ENCODE measurements at regions of chr15 and their contacts with region 1.

Region 1: GRCh38 chr15:74781431-74782258 is at the start of gene CSK:
- DNase-seq: peak in 1 of 2 experiments; percentile 77
- H3K4me3 ChIP-seq: peak within 1 kb of the TSS; percentile 95
- H3K27ac ChIP-seq: no peak within 1 kb of the TSS
- H3K4me1 ChIP-seq: peaks cover 20% of the 10 kb centered on the region
- H3K27me3 ChIP-seq: no peaks in the 10 kb centered on the region
- CTCF ChIP-seq: peak; percentile 65
- total RNA-seq, gene CSK: 78.3 TPM in 2 replicates

Region 2: DNA sequence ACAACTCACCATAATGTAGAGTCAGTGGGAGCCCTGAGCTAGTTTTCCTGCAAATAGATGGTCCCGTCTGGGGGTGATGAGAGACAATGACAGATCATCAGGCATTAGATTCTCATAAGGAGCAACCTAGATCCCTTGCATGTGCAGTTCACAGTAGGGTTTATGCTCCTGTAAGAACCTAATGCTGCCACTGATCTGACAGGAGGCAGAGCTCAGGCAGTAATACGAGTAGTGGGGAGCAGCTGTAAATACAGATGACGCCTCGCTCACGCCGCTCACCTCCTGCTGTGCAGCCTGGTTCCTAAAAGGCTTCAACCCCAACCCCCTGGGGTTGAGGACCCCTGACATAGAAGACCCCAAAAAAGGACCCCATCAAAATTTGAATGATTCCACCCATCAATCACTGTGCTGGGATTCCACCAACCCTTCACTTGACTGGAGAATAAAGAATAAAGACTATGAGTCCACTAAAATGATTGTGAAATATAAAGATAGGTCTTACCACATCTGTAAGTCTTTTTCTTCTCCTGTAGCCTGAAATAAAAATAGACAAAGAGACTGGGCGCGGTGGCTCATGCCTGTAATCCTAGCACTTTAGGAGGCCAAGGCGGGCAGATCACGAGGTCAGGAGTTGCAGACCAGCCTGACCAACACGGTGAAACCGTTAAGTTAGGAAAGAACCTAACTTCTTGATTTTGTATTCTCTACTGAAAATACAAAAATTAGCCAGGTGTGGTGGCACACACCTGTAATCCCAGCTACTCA is 310.8 kb before region 1 on chr15:
- CTCF ChIA-PET with region 1: interaction called, 10 read pairs
- POLR2A ChIA-PET with region 1: no interaction called
- intact Hi-C with region 1: no loop called
- DNase-seq: no peak
- H3K4me3 ChIP-seq: no peak overlapping the region
- H3K27ac ChIP-seq: no peak overlapping the region
- H3K4me1 ChIP-seq: no peaks in the 10 kb centered on the region
- H3K27me3 ChIP-seq: no peaks in the 10 kb centered on the region
- CTCF ChIP-seq: no peak

Region 3: GRCh38 chr15:74799856-74800547 is 18.4 kb after region 1 on chr15:
- CTCF ChIA-PET with region 1: interaction called, 9 read pairs
- POLR2A ChIA-PET with region 1: no interaction called
- intact Hi-C with region 1: loop called (anchors 2 kb)
- DNase-seq: peak; percentile 63 to 89
- H3K4me3 ChIP-seq: no peak overlapping the region
- H3K27ac ChIP-seq: no peak overlapping the region
- H3K4me1 ChIP-seq: 0 out of 2 replicates have a peak, but pooled peaks cover 8% of the 10 kb centered on the region
- H3K27me3 ChIP-seq: no peaks in the 10 kb centered on the region
- CTCF ChIP-seq: peak; percentile 96

Region 4: DNA sequence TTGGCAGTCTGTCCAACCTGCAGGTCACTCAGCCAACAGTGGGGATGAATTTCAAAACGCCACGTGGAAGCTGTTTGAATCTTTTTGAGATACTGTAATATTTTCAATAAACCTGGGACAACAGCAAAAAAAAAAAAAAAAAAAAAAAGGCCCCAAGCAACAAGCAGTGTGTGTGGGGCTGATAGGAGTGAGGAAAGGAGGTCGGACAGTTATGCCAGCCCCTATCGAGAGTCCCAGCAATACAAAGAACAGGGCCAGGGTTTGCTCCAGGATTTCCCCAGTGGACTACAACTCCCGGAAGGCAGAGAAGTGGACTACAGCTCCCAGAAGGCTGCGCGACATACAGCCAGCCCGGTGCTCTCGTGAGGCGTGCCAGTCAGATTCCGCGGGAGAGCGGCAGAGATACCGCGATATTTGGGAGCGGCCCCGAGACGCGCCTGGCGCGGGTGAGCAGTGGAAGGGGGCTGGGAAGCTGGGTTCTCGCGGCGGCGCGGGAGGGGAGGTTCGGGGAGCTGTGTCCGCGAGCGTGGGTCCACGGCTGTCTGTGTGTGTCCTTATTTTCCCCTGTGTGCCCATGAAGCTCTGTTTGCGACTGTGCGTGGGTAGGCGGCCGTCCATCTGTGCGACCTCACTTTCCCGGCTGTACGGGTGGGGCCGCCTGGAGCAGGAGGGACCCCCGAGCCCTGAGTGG is 241.7 kb after region 1 on chr15 and contains the start of gene PPCDC:
- CTCF ChIA-PET with region 1: no interaction called
- POLR2A ChIA-PET with region 1: interaction called, 14 read pairs
- intact Hi-C with region 1: no loop called
- DNase-seq: peak; percentile 85 to 93
- H3K4me3 ChIP-seq: peak within 1 kb of the TSS; percentile 90
- H3K27ac ChIP-seq: peak within 1 kb of the TSS; percentile 50
- H3K4me1 ChIP-seq: no peaks in the 10 kb centered on the region; the same call in 1 of the 2 replicates
- H3K27me3 ChIP-seq: no peaks in the 10 kb centered on the region
- CTCF ChIP-seq: no peak
- total RNA-seq, gene PPCDC: 23.7 and 24.4 TPM in 2 replicates

Measured in PC-9 (cell line).